Gastrocnemius medialis (tissue), 4 donors: ENCODE measurements at regions of chrX and their contacts with region 1.

Region 1: GRCh38 chrX:154547245-154548027 is at the start of gene IKBKG:
- DNase-seq: peak; percentile 80 to 87
- ATAC-seq: peak; percentile 85 to 87
- H3K4me3 ChIP-seq: peak within 1 kb of the TSS; percentile 61 to 77 (median 69)
- H3K27ac ChIP-seq: peak within 1 kb of the TSS; percentile 84 to 96 (median 92)
- H3K4me1 ChIP-seq: peaks cover 6 to 24% of the 10 kb centered on the region in 2 donors
- H3K27me3 ChIP-seq: no peaks in the 10 kb centered on the region
- CTCF ChIP-seq: no peak
- POLR2A ChIP-seq: peak in 1 of 2 donors; percentile 40
- total RNA-seq, gene IKBKG: 8.8 to 17.5 (median 11.6) TPM

Region 2: DNA sequence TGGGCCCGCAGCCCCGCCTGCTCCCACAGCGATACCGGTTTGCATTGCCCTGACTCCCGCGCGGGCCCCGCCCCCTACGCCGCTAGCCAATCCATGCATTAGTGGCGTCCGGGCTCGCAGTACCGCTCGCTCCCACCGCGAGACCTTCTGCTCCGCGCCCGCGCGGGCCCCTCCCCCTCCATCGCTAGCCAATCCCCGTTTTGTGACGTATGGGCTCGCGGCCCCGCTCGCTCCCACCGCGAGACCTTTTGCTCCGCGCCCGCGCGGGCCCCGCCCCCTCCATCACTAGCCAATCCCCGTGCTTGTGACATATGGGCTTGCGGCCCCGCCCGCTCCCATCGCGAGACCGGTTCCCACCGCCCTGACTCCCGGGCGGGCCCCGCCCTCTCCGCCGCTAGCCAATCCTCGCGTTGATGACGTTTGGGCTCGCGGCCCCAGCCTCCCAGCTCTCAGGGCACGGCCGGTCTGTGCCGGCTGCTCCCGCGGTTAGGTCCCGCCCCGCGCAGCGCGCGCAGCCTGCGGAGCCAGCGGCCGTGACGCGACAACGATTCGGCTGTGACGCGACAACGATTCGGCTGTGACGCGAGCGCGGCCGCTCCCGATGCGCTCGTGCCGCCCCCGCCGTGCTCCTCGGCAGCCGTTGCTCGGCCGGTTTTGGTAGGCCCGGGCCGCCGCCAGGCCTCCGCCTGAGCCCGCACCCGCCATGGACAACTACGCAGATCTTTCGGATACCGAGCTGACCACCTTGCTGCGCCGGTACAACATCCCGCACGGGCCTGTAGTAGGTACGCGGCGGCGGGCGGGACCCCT is 168.4 kb before region 1 on chrX and contains the start of gene EMD:
- in situ Hi-C with region 1: no loop called
- intact Hi-C with region 1: loop called (anchors 10 kb)
- DNase-seq: peak; percentile 95 to 98
- ATAC-seq: peak; percentile 79 to 84
- H3K4me3 ChIP-seq: peak within 1 kb of the TSS; percentile 67 to 84 (median 69)
- H3K27ac ChIP-seq: peak within 1 kb of the TSS; percentile 87 to 99 (median 96)
- H3K4me1 ChIP-seq: peaks cover 5 to 13% of the 10 kb centered on the region in 2 donors
- H3K27me3 ChIP-seq: no peaks in the 10 kb centered on the region
- CTCF ChIP-seq: peak in 1 of 5 experiments; percentile 5
- POLR2A ChIP-seq: peak; percentile 89 to 93
- total RNA-seq, gene EMD: 36.2 to 61.5 (median 53.2) TPM